CD8-positive, alpha-beta T cell (primary cell): ENCODE measurements at regions of chr14 and their contacts with region 1.

Region 1: GRCh38 chr14:68506021-68506644 is 286.7 kb downstream of the ZFP36L1 start:
- DNase-seq: peak in 1 of 9 experiments; percentile 25
- ATAC-seq: no peak
- H3K4me3 ChIP-seq: no peak overlapping the region
- H3K4me3 Mint-ChIP-seq: peak overlapping the region; percentile 64
- H3K27ac ChIP-seq: peak overlapping the region; percentile 49 to 52
- H3K27ac Mint-ChIP-seq: peak overlapping the region; percentile 91
- H3K4me1 ChIP-seq: peaks cover 64% of the 10 kb centered on the region
- H3K4me1 Mint-ChIP-seq: peaks cover 73% of the 10 kb centered on the region
- H3K27me3 ChIP-seq: no peaks in the 10 kb centered on the region
- H3K27me3 Mint-ChIP-seq: no peaks in the 10 kb centered on the region
- CTCF ChIP-seq: no peak

Region 2: DNA sequence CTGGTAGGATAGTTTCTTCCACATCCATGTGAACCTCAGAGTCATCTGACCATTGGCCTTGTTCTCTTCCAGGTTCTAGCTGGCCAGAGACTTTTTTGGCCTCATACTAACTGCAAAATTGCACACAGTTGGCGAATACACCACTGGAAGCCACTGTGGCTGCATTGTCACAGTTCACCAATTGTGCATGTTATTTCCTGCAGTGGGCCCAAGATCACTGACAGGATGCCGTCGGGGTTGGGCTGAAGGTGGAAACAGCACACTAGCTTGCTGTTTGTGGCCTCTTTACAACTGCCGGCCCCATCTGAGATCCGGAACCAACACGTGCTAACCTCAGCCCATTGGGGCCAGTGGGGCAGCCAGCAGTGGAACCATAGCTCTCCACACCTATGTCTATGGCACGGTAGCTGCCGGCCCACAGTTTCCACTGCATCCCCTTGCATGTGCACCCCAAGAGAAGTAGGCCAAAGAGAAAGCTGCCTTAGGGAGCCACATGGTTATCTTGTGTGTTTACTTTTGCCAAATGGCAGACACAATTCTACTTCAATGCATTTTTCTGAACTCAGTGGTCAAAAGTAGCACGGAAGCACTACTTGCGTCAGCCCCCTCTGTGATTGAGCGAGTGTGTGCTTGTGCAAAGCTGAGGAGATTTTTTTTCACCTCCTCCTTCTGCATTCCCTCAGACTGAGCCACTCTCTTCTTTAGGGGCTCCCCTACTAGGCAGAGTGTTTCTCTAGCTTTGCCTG is 222.6 kb before region 1 on chr14:
- CTCF ChIA-PET with region 1: no interaction called
- POLR2A ChIA-PET with region 1: interaction called, 12 read pairs
- intact Hi-C with region 1: loop called (anchors 5 to 10 kb)
- DNase-seq: peak; percentile 32 to 87 (median 72)
- ATAC-seq: peak; percentile 69
- H3K4me3 ChIP-seq: peak overlapping the region in 1 of 2 experiments; percentile 6
- H3K4me3 Mint-ChIP-seq: peak overlapping the region; percentile 62
- H3K27ac ChIP-seq: peak overlapping the region; percentile 57 to 89
- H3K27ac Mint-ChIP-seq: peak overlapping the region; percentile 98
- H3K4me1 ChIP-seq: peaks cover 71% of the 10 kb centered on the region
- H3K4me1 Mint-ChIP-seq: peaks cover 85% of the 10 kb centered on the region
- H3K27me3 ChIP-seq: no peaks in the 10 kb centered on the region
- H3K27me3 Mint-ChIP-seq: no peaks in the 10 kb centered on the region
- CTCF ChIP-seq: no peak

Region 3: DNA sequence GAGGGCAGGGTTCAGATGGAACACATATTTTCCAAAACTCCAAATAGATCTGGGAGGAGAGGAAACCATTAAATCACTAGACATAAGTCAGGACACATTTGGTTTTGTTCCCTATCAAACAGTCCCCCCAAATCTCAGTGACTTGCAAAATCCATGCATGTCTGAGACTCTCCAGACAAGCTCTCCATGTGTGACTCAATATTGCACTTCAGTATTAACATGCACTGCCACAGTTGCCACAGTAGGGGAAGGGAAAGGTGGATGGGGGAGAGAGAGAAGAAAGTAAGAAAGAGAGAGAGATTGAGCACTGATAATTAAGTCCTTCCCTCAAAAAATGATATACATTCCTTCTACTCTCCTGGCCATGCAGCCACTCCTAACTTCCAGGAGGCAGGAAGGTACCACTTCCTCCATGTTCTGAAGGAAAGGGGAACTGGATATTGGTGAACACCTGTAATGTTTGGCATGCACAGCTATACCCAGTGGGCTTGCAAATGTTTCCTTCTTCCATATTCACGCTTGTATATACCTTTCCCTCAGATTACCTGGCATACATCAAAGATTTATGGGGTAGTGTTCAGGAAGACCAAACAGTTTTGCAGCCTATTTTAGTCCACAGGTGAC is 23.2 kb before region 1 on chr14:
- CTCF ChIA-PET with region 1: interaction called, 4 read pairs
- POLR2A ChIA-PET with region 1: interaction called, 20 read pairs
- intact Hi-C with region 1: loop called in 1 of 2 experiments (anchors 2 kb)
- DNase-seq: no peak
- ATAC-seq: no peak
- H3K4me3 ChIP-seq: no peak overlapping the region
- H3K4me3 Mint-ChIP-seq: no peak overlapping the region
- H3K27ac ChIP-seq: no peak overlapping the region
- H3K27ac Mint-ChIP-seq: peak overlapping the region; percentile 94
- H3K4me1 ChIP-seq: peaks cover 43% of the 10 kb centered on the region
- H3K4me1 Mint-ChIP-seq: peaks cover 76% of the 10 kb centered on the region
- H3K27me3 ChIP-seq: no peaks in the 10 kb centered on the region
- H3K27me3 Mint-ChIP-seq: no peaks in the 10 kb centered on the region
- CTCF ChIP-seq: no peak

Region 4: DNA sequence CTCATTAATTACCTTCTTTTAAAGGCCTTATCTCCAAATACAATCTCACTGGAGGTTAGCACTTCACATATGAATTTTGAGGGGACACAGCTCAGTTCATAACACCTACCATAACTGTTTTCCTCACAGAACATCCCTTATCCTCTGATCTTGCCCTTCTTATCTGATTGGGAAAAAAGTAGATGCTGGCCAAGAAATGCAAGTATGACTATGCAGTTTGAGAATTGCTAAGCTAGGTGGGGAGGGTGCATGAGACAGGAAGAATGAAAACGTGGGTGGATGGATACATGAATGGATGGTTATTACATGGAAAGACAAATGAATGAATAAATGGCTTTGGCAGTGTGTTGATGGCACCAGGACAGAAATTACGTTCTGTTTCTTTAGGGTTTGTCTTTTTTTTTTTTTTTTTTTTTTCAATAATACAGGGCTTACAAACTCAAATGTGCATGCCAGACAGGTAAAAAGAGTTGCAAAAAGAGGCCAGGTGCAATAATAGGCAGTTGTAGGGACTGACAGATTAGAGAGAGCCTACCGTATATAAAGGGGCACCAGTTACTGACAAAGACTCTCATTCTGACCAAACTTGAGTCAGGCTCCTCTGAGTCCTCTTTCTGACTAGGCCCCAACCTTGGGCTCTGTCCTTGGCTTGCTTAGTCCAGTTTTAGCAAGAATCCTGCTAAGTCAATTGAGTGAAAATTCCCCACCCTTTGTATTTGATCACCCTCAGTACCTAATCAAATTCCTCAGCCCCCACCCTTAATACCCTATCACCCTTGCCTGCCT is 18.1 kb before region 1 on chr14:
- CTCF ChIA-PET with region 1: interaction called, 4 read pairs
- POLR2A ChIA-PET with region 1: interaction called, 20 read pairs
- intact Hi-C with region 1: loop called (anchors 2 kb)
- DNase-seq: no peak
- ATAC-seq: no peak
- H3K4me3 ChIP-seq: no peak overlapping the region
- H3K4me3 Mint-ChIP-seq: no peak overlapping the region
- H3K27ac ChIP-seq: no peak overlapping the region
- H3K27ac Mint-ChIP-seq: no peak overlapping the region
- H3K4me1 ChIP-seq: peaks cover 28% of the 10 kb centered on the region
- H3K4me1 Mint-ChIP-seq: peaks cover 43% of the 10 kb centered on the region
- H3K27me3 ChIP-seq: no peaks in the 10 kb centered on the region
- H3K27me3 Mint-ChIP-seq: no peaks in the 10 kb centered on the region
- CTCF ChIP-seq: no peak

Region 5: GRCh38 chr14:68520637-68521556 is 14.8 kb after region 1 on chr14:
- CTCF ChIA-PET with region 1: interaction called, 4 read pairs
- POLR2A ChIA-PET with region 1: interaction called, 42 read pairs
- intact Hi-C with region 1: no loop called
- DNase-seq: no peak
- ATAC-seq: no peak
- H3K4me3 ChIP-seq: no peak overlapping the region
- H3K4me3 Mint-ChIP-seq: no peak overlapping the region
- H3K27ac ChIP-seq: no peak overlapping the region
- H3K27ac Mint-ChIP-seq: no peak overlapping the region
- H3K4me1 ChIP-seq: peaks cover 21% of the 10 kb centered on the region
- H3K4me1 Mint-ChIP-seq: peaks cover 39% of the 10 kb centered on the region
- H3K27me3 ChIP-seq: no peaks in the 10 kb centered on the region
- H3K27me3 Mint-ChIP-seq: no peaks in the 10 kb centered on the region
- CTCF ChIP-seq: no peak

Region 6: DNA sequence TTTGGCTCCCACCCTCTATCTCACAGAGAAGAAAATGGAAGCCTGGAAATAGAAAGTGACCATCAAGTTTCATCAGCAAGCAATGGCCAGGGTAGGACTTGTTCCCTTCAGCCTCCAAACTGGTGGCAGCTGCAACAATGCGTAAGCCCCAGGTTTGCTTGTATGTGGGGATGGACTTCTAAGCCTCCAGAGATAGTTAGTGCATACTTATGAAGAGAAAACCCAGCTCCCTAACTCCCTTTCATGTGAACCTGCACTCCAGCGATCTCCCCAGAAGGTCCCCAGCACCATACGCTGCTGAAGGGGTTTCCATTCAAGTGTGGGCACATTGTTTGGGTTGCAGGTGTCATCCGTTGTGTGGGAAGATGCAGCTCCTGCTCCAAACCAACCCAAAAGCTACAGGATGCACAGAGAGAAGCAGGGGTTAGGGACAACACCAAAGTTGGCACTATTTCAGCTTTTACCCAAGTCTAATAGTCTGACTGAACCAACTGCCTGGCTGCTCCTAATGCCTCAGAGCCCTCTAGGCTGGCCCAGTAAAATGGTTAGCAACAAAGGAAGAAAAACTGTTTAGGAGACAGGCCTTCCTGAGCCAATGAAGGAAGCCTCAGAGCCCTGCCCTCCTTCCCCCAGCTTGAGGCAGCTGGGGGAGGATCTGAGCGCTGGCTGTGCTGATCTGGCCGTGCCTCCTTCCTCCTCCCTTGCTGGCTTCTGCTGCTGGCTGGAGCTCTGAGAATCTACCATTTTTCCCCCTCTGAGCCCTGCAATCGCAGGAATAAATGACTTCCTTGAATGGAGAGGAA is 274.4 kb after region 1 on chr14:
- CTCF ChIA-PET with region 1: interaction called, 10 read pairs
- POLR2A ChIA-PET with region 1: interaction called, 39 read pairs
- intact Hi-C with region 1: no loop called
- DNase-seq: peak in 5 of 9 experiments; percentile 36 to 72 (median 58)
- ATAC-seq: peak; percentile 11
- H3K4me3 ChIP-seq: peak overlapping the region; percentile 29 to 41
- H3K4me3 Mint-ChIP-seq: peak overlapping the region; percentile 83
- H3K27ac ChIP-seq: peak overlapping the region; percentile 47 to 86
- H3K27ac Mint-ChIP-seq: peak overlapping the region; percentile 96
- H3K4me1 ChIP-seq: peaks cover 82% of the 10 kb centered on the region
- H3K4me1 Mint-ChIP-seq: peaks cover 84% of the 10 kb centered on the region
- H3K27me3 ChIP-seq: no peaks in the 10 kb centered on the region
- H3K27me3 Mint-ChIP-seq: no peaks in the 10 kb centered on the region
- CTCF ChIP-seq: no peak